Activated naive CD4-positive, alpha-beta T cell treated with anti-CD3 and anti-CD28 coated beads for 36 hours (primary cell): ENCODE measurements at regions of chr3 and their contacts with region 1.

Region 1: GRCh38 chr3:152183473-152183872 is 85.3 kb upstream of the MBNL1 start:
- DNase-seq: peak; percentile 80
- H3K4me3 Mint-ChIP-seq: peak overlapping the region; percentile 46
- H3K27ac Mint-ChIP-seq: peak overlapping the region; percentile 28
- H3K4me1 Mint-ChIP-seq: peaks cover 81% of the 10 kb centered on the region
- H3K27me3 Mint-ChIP-seq: no peaks in the 10 kb centered on the region

Region 2: GRCh38 chr3:151301787-151302186 is 881.7 kb before region 1 on chr3:
- CTCF ChIA-PET with region 1: no interaction called
- intact Hi-C with region 1: no loop called
- DNase-seq: no peak
- H3K4me3 Mint-ChIP-seq: no peak overlapping the region
- H3K27ac Mint-ChIP-seq: no peak overlapping the region
- H3K4me1 Mint-ChIP-seq: peaks cover 38% of the 10 kb centered on the region
- H3K27me3 Mint-ChIP-seq: peaks cover 26% of the 10 kb centered on the region

Region 3: GRCh38 chr3:151890721-151891141 is 292.7 kb before region 1 on chr3:
- CTCF ChIA-PET with region 1: no interaction called
- intact Hi-C with region 1: no loop called
- DNase-seq: no peak
- H3K4me3 Mint-ChIP-seq: no peak overlapping the region
- H3K27ac Mint-ChIP-seq: no peak overlapping the region
- H3K4me1 Mint-ChIP-seq: peaks cover 7% of the 10 kb centered on the region
- H3K27me3 Mint-ChIP-seq: no peaks in the 10 kb centered on the region

Region 4: GRCh38 chr3:152139651-152140050 is 43.8 kb before region 1 on chr3:
- CTCF ChIA-PET with region 1: no interaction called
- intact Hi-C with region 1: no loop called
- DNase-seq: no peak
- H3K4me3 Mint-ChIP-seq: no peak overlapping the region
- H3K27ac Mint-ChIP-seq: no peak overlapping the region
- H3K4me1 Mint-ChIP-seq: no peaks in the 10 kb centered on the region
- H3K27me3 Mint-ChIP-seq: no peaks in the 10 kb centered on the region

Region 5: DNA sequence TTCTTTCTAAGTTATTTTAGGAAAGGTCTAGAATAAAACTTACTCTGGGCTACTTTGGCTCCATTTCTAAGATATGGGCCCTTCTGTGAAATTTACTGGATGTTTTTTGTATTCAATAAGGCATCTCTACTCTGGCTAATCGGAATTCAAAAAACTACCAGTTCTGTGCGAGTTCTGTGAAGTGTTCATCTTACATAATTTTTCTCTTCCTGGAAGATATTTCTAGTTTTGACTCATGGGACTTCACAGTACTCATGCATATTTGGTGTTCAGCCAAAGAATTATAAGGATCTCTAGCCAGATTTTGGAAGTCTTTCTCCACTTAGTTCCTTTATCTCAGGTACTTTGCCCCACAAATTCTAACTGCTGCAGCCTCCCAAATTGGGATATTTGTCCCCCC is 38.9 kb after region 1 on chr3:
- CTCF ChIA-PET with region 1: interaction called, 14 read pairs
- intact Hi-C with region 1: no loop called
- DNase-seq: no peak
- H3K4me3 Mint-ChIP-seq: peak overlapping the region; percentile 71
- H3K27ac Mint-ChIP-seq: peak overlapping the region; percentile 98
- H3K4me1 Mint-ChIP-seq: peaks cover 81% of the 10 kb centered on the region
- H3K27me3 Mint-ChIP-seq: no peaks in the 10 kb centered on the region

Region 6: GRCh38 chr3:152444029-152444641 is 260.7 kb after region 1 on chr3:
- CTCF ChIA-PET with region 1: interaction called, 24 read pairs
- intact Hi-C with region 1: loop called (anchors 1 kb)
- DNase-seq: no peak
- H3K4me3 Mint-ChIP-seq: no peak overlapping the region
- H3K27ac Mint-ChIP-seq: peak overlapping the region; percentile 56
- H3K4me1 Mint-ChIP-seq: peaks cover 68% of the 10 kb centered on the region
- H3K27me3 Mint-ChIP-seq: no peaks in the 10 kb centered on the region